ENCODE measurements at regions of chr7 and their contacts with region 1.

Region 1: GRCh38 chr7:2104107-2104710 is 128.5 kb downstream of the MAD1L1 start:
- DNase-seq: peak; percentile 90

Region 2: DNA sequence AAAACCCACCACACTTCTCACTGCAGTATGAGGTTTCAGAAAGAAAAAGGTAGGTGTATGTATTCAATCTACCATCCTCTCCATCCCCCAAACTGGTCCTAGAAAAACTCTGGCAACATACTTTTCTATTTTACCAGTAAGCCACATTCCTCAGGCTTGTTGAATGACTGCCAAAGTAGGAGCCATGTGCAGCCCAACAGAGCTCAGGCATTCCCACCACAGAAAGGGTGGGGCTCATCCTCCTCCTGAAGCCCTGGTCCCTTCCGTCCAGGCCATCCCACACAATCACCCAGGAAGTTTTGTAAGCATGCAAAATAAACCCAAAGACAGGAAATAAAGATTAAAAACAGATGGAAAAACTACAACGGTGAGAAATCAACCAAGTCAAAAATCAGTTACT is 71.3 kb after region 1 on chr7:
- intact Hi-C with region 1: loop called (anchors 5 kb)
- DNase-seq: peak; percentile 75

Region 3: GRCh38 chr7:2209146-2209960 is 105.1 kb after region 1 on chr7:
- intact Hi-C with region 1: loop called (anchors 2 kb)
- DNase-seq: no peak